ENCODE measurements at regions of chr15 and their contacts with region 1.

Region 1: DNA sequence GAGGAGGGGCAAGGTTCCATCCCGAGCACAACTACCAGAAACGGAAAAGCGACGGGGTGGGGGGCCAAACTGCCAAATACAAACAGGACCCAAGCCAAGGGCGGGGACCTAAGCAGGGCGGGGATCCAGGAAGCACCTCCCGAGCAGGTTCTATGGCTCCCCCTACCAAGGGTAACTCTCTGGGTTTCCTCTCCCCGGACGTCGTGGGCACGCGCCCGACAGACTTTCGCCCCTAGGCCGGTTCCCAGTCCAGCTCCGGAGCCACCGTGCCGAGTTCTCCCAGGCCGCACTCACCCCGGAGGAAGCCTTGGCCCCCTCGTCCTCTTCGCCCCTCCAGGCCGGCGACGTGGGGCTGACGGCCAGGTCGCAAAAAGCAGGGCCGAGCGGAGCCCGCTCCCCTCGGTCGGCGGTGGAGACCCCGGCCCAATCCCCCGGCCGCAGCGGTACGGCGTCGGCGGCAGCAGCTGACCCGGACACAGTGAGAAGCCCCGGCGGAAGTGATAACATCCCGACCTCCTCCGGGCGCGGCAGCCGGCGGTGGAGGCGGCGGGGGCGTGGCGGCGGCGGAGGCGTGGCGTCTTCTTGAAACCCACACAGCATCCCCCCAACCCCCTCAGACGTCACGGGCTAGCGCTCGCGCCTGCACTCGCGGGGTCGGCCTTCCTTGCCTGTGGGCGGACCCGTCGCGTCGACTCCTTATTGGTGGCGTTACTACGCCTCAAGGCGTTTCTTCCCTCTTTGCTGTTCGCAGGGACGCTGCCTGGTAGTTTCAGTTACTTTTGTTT is at the start of gene BNIP2:
- DNase-seq: peak; percentile 99
- H3K4me3 Mint-ChIP-seq: peak within 1 kb of the TSS; percentile 87
- H3K27ac Mint-ChIP-seq: peak within 1 kb of the TSS; percentile 93
- H3K4me1 Mint-ChIP-seq: peaks cover 43% of the 10 kb centered on the region
- H3K27me3 Mint-ChIP-seq: no peaks in the 10 kb centered on the region
- total RNA-seq, gene BNIP2: 44.2 to 44.7 TPM

Region 2: DNA sequence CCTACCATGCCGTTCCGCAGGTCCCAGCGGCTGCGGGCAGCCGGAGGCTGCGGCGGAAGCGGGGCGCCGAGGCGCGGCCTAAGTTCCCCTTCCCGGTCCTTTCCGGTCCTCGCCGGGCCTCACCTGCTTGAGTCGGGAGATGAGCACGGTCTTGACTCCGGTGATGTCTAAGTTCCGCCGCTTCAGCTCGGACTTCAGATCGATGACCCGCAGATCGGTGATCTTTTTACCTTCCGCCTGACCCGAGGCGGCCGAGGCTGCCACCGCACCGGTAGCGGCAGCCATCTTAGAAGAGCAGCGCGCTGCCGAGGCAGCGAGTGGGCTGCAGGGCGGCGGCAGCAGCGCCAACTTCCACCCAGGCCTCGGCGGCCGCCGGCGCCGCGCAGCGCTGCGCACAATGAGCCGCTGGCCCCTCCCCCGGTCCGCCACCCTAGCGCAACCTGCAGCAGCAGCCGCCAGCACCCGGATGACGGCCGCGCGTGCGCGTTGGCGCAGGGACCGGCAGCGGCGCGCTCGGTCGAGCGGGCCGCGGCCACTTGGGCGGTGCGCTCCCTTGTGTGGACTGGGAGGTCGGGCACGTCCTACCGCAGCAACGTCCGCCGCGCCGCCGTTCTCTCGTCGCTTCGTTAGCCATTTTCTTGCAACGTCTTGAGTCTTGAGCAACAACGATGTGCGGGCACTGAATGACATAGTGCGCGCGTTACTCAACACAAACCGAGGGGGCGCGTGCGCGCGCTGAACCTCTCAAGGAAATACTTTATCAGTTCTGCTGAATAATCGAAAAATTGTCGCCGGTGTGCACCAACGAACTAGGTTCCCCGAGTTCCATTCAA is 755.5 kb before region 1 on chr15 and contains the start of gene SLTM:
- CTCF ChIA-PET with region 1: no interaction called
- intact Hi-C with region 1: loop called (anchors 1 kb)
- DNase-seq: peak; percentile 92
- H3K4me3 Mint-ChIP-seq: peak within 1 kb of the TSS; percentile 93
- H3K27ac Mint-ChIP-seq: peak within 1 kb of the TSS; percentile 99
- H3K4me1 Mint-ChIP-seq: peaks cover 23% of the 10 kb centered on the region
- H3K27me3 Mint-ChIP-seq: no peaks in the 10 kb centered on the region
- total RNA-seq, gene SLTM: 52.0 to 56.0 TPM

Region 3: GRCh38 chr15:59725172-59725486 is 36.1 kb after region 1 on chr15:
- CTCF ChIA-PET with region 1: interaction called, 20 read pairs
- intact Hi-C with region 1: loop called (anchors 2 kb)
- DNase-seq: no peak
- H3K4me3 Mint-ChIP-seq: no peak overlapping the region
- H3K27ac Mint-ChIP-seq: no peak overlapping the region
- H3K4me1 Mint-ChIP-seq: no peaks in the 10 kb centered on the region
- H3K27me3 Mint-ChIP-seq: no peaks in the 10 kb centered on the region

Region 4: DNA sequence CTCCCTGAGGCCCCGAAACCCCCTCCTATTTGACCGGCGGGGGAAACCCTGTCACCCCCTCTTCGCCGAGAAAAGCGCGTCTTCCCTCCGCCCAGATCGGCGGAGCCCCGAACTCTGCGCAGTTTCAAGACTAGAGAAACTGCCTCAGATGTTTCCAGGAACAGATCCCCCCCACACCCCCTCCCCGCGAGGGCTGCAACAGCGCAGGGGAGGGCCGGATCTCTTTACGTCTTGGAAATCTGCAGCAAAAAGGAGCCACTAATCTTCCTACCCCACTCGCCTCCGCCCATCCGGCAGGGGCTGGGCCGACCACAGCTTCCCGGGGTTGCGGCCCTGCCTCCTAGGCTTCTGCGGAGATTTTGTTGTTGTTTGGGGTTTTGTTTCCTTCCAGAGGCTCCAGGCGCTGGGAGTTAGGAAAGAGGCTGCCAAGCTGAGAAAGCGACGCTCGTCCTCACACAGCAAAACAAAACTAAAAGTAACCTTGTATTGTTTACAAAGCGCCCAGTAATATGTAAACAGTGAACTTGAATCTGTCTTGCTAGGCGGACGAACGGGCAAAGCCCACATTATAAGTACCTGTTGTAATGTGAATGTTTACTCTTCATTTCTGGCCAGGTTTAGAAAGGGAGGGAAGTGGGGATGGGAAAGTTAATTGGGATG is 317.3 kb after region 1 on chr15:
- CTCF ChIA-PET with region 1: interaction called, 4 read pairs
- intact Hi-C with region 1: loop called (anchors 1 kb)
- DNase-seq: peak; percentile 83
- H3K4me3 Mint-ChIP-seq: peak overlapping the region; percentile 82
- H3K27ac Mint-ChIP-seq: peak overlapping the region; percentile 68
- H3K4me1 Mint-ChIP-seq: peaks cover 26% of the 10 kb centered on the region
- H3K27me3 Mint-ChIP-seq: peaks cover 87% of the 10 kb centered on the region

Region 5: GRCh38 chr15:60179786-60180391 is 490.9 kb after region 1 on chr15:
- CTCF ChIA-PET with region 1: interaction called, 4 read pairs
- intact Hi-C with region 1: loop called (anchors 1 kb)
- DNase-seq: peak; percentile 49
- H3K4me3 Mint-ChIP-seq: no peak overlapping the region
- H3K27ac Mint-ChIP-seq: no peak overlapping the region
- H3K4me1 Mint-ChIP-seq: no peaks in the 10 kb centered on the region
- H3K27me3 Mint-ChIP-seq: peaks cover under 1% of the 10 kb centered on the region

Region 6: DNA sequence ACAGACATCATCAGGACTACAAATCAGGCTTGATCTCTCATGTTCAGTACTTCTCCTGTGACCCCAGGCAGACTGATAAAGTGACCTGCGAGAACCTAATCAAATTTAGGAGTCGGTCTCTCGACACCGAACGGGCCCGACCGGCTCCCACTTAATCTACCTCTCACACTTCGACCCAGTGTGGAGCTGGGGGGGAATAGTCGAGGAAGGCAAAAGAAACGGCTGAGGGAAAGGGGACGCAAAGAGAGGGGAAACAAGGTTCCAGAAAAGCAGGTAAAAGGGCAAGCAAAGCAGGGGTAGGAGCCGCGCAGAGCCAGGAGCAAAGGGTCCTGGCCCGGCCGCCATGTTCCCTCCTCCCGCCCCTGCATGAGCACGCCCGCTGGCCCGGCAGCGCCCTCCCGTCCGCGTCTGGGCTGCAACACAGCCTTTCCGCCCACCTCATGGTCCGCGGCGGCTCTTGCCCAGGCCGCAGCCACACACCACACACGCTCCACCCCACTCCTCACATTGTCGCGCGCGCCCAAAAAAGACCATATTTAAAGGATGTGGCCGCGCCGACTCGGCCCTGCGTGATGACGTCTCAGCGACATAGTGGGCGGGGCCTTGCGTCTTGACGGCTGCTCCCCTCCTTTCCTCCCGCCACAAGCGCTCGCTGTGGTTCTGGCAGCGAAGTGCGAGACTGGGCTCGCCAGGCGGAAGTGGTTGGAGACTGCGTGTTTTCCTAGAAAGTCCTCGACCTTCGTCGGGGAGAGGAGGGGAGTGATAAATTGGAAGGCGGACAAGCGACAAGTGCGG is 789.7 kb after region 1 on chr15 and contains the start of gene ICE2:
- CTCF ChIA-PET with region 1: no interaction called
- intact Hi-C with region 1: loop called (anchors 2 kb)
- DNase-seq: peak; percentile 98
- H3K4me3 Mint-ChIP-seq: peak within 1 kb of the TSS; percentile 93
- H3K27ac Mint-ChIP-seq: peak within 1 kb of the TSS; percentile 94
- H3K4me1 Mint-ChIP-seq: peaks cover 44% of the 10 kb centered on the region
- H3K27me3 Mint-ChIP-seq: no peaks in the 10 kb centered on the region
- total RNA-seq, gene ICE2: 75.2 to 76.7 TPM

Measured in activated naive CD4-positive, alpha-beta T cell treated with anti-CD3 and anti-CD28 coated beads for 36 hours (primary cell).